Activated naive CD4-positive, alpha-beta T cell treated with anti-CD3 and anti-CD28 coated beads for 36 hours (primary cell): ENCODE measurements at regions of chr14 and their contacts with region 1.

Region 1: DNA sequence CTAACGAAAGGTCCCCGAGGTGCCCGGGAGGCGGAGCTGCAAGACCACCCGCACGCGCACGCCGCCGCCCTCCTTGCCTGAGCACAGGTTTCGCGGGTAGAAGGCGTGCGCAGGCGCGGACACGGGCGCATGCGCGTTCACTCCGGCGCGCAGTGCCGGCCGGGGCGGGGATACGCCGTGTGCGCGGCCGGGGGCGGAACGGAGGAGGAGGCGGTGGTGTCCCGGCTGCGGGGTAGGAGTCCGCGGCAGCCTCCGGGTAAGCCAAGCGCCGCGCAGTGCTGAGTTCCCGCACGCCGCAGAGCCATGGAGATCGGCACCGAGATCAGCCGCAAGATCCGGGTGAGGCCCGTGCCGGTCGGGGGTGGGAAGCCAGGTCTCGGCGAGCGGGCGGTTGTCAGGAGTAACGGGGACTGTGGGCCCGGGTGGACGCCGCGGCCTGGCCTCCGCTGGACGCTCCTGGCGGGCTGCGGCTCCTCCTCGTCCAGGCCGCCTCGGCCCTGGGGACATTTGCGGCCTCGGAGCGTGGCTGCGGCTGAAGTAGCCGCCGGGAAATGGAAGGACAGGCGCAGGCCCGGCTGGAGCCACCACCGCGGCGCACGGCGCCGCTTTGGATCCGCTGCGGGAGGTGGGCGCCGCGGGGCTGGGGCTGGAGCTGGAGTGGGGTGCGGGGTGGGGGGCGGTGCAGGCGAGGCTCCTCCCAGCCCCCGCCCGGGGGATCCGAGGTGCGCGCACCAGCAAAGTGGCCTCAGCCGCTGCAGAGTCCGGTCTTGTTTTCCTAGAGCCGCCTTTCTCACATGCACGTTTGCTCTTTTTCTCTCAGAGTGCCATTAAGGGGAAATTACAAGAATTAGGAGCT is at the start of gene ZC3H14:
- DNase-seq: peak; percentile 87
- H3K4me3 Mint-ChIP-seq: peak within 1 kb of the TSS; percentile 86
- H3K27ac Mint-ChIP-seq: peak within 1 kb of the TSS; percentile 82
- H3K4me1 Mint-ChIP-seq: peaks cover 28% of the 10 kb centered on the region
- H3K27me3 Mint-ChIP-seq: peaks cover 9% of the 10 kb centered on the region
- total RNA-seq, gene ZC3H14: 33.3 to 37.9 TPM

Region 2: GRCh38 chr14:87944987-87945604 is 618.0 kb before region 1 on chr14:
- CTCF ChIA-PET with region 1: no interaction called
- intact Hi-C with region 1: loop called (anchors 10 kb)
- DNase-seq: no peak
- H3K4me3 Mint-ChIP-seq: no peak overlapping the region
- H3K27ac Mint-ChIP-seq: no peak overlapping the region
- H3K4me1 Mint-ChIP-seq: no peaks in the 10 kb centered on the region
- H3K27me3 Mint-ChIP-seq: no peaks in the 10 kb centered on the region

Region 3: GRCh38 chr14:88005978-88006851 is 556.8 kb before region 1 on chr14:
- CTCF ChIA-PET with region 1: no interaction called
- intact Hi-C with region 1: loop called (anchors 5 kb)
- DNase-seq: peak; percentile 85
- H3K4me3 Mint-ChIP-seq: peak overlapping the region; percentile 88
- H3K27ac Mint-ChIP-seq: peak overlapping the region; percentile 95
- H3K4me1 Mint-ChIP-seq: peaks cover 63% of the 10 kb centered on the region
- H3K27me3 Mint-ChIP-seq: no peaks in the 10 kb centered on the region

Region 4: DNA sequence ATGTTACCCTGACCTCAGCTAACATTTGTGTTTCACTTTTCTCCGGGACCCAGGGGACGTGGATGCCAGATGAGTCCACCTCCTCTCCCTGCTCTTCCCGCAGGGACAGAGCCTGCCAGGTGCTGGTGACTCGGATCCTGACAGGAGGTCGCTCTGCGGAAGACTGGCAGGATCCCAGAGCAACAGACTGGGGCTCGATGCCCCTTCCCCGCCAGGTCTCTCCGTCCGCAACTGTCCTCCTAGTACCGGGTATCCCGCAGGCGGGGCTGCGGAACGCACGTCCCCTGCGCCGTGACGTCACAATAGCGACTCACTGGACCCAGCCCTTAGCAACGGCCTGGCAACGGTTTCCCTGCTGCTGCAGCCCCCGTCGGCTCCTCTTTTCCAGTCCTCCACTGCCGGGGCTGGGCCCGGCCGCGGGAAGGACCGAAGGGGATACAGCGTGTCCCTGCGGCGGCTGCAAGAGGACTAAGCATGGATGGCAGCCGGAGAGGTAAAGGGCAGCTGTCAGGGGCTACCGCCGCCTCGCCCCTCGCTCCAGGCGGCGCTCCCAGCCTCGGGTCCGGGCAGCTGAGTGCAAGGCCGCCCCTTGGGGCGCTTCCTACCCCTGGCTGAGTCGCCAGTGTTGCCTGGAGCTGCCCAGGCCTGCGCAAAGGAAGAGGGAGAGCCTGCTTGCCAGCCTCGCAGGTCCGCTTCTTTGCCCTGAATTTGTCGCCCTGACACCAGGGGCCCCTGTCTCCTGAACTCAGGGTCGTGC is 177.5 kb before region 1 on chr14 and contains the start of gene SPATA7:
- CTCF ChIA-PET with region 1: no interaction called
- intact Hi-C with region 1: loop called (anchors 5 kb)
- DNase-seq: peak; percentile 89
- H3K4me3 Mint-ChIP-seq: peak within 1 kb of the TSS; percentile 93
- H3K27ac Mint-ChIP-seq: peak within 1 kb of the TSS; percentile 56
- H3K4me1 Mint-ChIP-seq: peaks cover 9% of the 10 kb centered on the region
- H3K27me3 Mint-ChIP-seq: no peaks in the 10 kb centered on the region
- total RNA-seq, gene SPATA7: 3.3 to 3.5 TPM

Region 5: GRCh38 chr14:88551094-88551870 is 11.8 kb before region 1 on chr14:
- CTCF ChIA-PET with region 1: no interaction called
- intact Hi-C with region 1: loop called (anchors 1 kb)
- DNase-seq: peak; percentile 67
- H3K4me3 Mint-ChIP-seq: peak overlapping the region; percentile 74
- H3K27ac Mint-ChIP-seq: no peak overlapping the region
- H3K4me1 Mint-ChIP-seq: peaks cover 14% of the 10 kb centered on the region
- H3K27me3 Mint-ChIP-seq: peaks cover 29% of the 10 kb centered on the region

Region 6: GRCh38 chr14:88667555-88668273 is 104.7 kb after region 1 on chr14:
- CTCF ChIA-PET with region 1: no interaction called
- intact Hi-C with region 1: loop called (anchors 2 kb)
- DNase-seq: peak; percentile 66
- H3K4me3 Mint-ChIP-seq: no peak overlapping the region
- H3K27ac Mint-ChIP-seq: no peak overlapping the region
- H3K4me1 Mint-ChIP-seq: no peaks in the 10 kb centered on the region
- H3K27me3 Mint-ChIP-seq: no peaks in the 10 kb centered on the region

Region 7: GRCh38 chr14:88824314-88825077 is 261.4 kb after region 1 on chr14 and contains the start of gene TTC8:
- CTCF ChIA-PET with region 1: no interaction called
- intact Hi-C with region 1: loop called (anchors 2 kb)
- DNase-seq: peak; percentile 88
- H3K4me3 Mint-ChIP-seq: peak within 1 kb of the TSS; percentile 80
- H3K27ac Mint-ChIP-seq: peak within 1 kb of the TSS; percentile 92
- H3K4me1 Mint-ChIP-seq: peaks cover 9% of the 10 kb centered on the region
- H3K27me3 Mint-ChIP-seq: no peaks in the 10 kb centered on the region
- total RNA-seq, gene TTC8: 1.8 to 1.9 TPM